ENCODE measurements at regions of chr12 and their contacts with region 1.

Region 1: DNA sequence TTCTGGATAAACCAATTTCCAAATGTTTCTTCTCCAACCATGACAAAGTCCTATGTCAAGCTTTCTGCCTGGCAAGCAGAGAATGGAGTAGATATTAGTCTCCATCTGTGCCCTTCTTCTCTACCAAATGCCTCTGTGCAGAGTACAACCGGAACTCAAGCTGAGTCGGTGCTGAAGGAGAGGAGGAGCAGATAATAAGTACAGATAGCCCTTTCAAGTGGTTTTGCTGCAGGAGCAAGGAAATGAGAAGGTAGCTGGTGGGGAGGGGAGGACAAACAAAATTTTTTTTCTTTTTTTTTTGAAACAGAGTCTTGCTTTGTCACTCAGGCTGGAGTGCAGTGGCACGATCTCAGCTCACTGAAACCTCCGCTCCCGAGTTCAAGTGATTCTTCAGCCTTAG is 14.2 kb upstream of the HELB start:
- DNase-seq: no peak
- ATAC-seq: no peak
- H3K4me3 ChIP-seq: no peak overlapping the region
- H3K27ac ChIP-seq: peak overlapping the region in 1 of 10 donors; percentile 62
- H3K4me1 ChIP-seq: peaks cover 0 to 11% (median 0%) of the 10 kb centered on the region in 9 donors
- H3K27me3 ChIP-seq: no peaks in the 10 kb centered on the region
- CTCF ChIP-seq: no peak

Region 2: DNA sequence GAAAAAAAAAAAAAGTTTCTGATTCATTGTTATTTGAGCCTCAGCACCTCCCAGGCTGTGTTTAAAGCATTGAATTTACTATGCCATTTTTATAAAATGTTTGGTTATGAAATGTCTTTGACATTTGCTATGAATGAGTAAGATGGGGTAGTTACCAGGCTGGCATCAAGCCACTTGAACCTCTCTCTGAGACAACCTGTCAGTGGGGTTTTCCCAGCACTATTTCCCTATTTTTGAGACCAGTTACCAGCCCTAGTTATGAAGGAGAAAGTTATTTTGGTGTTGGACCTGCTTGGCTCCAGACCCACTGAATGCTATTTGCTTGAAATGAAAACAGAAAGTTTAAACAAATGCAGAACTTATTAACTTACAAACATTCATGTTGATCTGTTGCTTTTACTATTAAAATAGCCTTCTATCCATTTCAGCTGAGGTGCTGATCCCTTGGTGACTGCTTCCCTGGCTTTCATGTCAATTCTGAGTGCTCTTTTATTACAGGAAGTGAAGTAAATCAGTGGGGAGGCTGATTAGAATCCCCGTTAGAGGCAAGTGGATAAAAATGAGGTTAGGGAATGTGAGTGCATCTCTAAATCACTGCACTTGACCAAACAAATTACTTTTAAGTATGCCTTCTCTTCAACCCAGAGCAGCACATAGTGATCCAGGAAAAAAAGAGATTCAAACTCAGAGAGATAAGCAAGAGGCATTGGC is 195.4 kb before region 1 on chr12:
- intact Hi-C with region 1: no loop called
- DNase-seq: no peak
- ATAC-seq: no peak
- H3K4me3 ChIP-seq: no peak overlapping the region
- H3K27ac ChIP-seq: no peak overlapping the region
- H3K4me1 ChIP-seq: peaks cover 0 to 13% (median 0%) of the 10 kb centered on the region in 9 donors
- H3K27me3 ChIP-seq: peaks cover 0 to 3% (median 0%) of the 10 kb centered on the region in 7 donors
- CTCF ChIP-seq: no peak

Region 3: DNA sequence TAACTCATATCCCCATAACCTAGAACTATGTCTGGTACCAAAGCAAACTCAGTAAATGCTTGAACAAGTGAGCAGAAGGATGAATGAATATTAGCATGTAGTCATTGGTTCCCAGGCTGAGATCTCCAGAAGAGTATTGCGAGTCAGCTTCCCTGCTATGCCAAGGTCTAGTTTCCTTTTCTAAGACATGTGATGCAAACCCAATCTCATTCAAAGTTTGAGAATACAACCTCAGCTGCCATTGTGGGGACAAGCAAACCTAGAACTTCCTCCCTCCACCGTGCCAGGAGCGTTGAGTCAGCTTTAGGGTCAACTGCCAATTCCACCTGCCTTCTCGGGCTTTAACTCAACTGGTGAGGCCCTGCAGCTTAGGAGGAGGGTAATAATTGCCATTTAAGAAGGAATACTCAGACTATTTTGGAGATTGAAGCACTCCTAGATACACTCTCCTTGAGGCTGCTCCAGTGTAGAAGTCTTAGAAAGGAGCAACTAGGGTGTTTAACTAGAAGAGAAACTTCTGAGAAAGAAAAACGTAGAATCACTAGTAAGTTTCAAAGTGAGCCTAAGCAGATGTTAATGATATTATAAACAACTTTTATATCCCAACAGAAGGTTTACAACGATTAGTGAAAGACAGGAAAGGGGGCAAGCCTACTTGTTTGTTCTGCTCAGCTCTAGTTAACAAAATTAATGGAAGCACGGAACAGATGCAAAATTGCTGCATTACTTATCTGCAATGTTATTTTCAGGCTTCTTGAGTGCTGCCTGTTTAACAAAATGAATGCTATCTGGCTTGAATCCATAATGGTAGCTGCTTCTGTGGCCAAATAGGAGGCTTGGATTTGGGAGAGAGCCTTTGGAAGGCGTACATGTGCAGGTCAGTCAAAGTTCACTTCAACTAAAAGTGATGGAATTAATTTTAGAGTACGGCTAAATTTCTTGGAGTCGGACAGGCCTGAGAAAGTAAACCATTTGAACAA is 111.1 kb after region 1 on chr12:
- intact Hi-C with region 1: loop called in 1 of 10 experiments (anchors 10 kb)
- DNase-seq: no peak
- ATAC-seq: peak in 4 of 8 donors; percentile 27 to 42 (median 30)
- H3K4me3 ChIP-seq: no peak overlapping the region
- H3K27ac ChIP-seq: no peak overlapping the region
- H3K4me1 ChIP-seq: peaks cover 0 to 14% (median 5%) of the 10 kb centered on the region in 9 donors
- H3K27me3 ChIP-seq: no peaks in the 10 kb centered on the region
- CTCF ChIP-seq: no peak